ENCODE measurements at regions of chr15 and their contacts with region 1.

Region 1: GRCh38 chr15:41276821-41277220 is 45.8 kb downstream of the CHP1 start:
- DNase-seq: no peak
- H3K4me3 ChIP-seq: no peak overlapping the region
- H3K27ac ChIP-seq: no peak overlapping the region
- H3K4me1 ChIP-seq: no peaks in the 10 kb centered on the region
- H3K27me3 ChIP-seq: no peaks in the 10 kb centered on the region
- CTCF ChIP-seq: no peak
- EP300 ChIP-seq: no peak
- POLR2A ChIP-seq: no peak

Region 2: DNA sequence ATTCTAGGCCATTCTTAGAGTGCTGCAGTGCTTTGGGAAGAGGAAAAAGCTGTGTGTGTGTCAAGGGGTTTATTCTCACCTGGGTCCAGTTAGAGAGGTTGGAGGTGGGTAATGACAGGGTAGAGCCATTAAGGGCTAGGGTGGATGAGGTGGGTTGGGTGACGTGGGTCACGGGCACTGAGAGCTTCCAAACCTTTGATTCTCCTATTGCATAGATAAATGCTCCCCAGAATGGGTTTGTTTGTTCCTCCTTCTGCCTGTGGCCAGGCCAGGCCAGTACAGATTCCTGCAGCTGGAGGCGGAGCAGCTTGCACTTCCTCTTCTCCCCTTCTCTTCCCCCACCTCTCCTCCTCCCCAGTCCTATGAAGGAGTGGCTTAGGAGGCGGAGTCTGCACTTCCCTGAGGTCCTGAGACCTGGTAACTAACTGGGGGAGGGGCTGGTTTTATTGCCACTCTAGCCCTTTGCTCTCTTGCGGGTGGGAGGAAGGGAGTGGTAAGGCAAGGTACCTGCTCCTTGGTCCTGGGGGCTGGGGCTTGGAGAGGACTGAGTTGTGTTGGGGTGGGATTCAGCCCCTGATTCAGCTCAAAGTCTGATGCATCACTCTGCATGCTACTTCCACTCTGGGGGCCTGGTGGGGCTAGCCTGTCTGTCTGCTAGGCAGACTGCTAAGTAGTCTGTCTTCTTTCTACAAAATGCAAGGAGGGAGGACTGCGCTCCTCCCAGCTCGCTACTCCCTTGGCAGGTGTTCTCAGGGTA is 429.4 kb before region 1 on chr15:
- intact Hi-C with region 1: no loop called
- DNase-seq: peak; percentile 84 to 94
- H3K4me3 ChIP-seq: peak overlapping the region in 3 of 4 donors; percentile 62 to 78 (median 67)
- H3K27ac ChIP-seq: peak overlapping the region; percentile 88 to 94 (median 92)
- H3K4me1 ChIP-seq: peaks cover 26 to 57% (median 45%) of the 10 kb centered on the region in 4 donors
- H3K27me3 ChIP-seq: peaks cover 0 to 41% (median 3%) of the 10 kb centered on the region in 3 donors
- CTCF ChIP-seq: peak in 3 of 7 experiments; percentile 17 to 34 (median 31)
- EP300 ChIP-seq: no peak
- POLR2A ChIP-seq: no peak

Region 3: GRCh38 chr15:41230650-41231533 is 45.9 kb before region 1 on chr15 and contains the starts of genes CHP1 and EXD1:
- intact Hi-C with region 1: loop called (anchors 10 kb)
- DNase-seq: peak; percentile 98 to 99
- H3K4me3 ChIP-seq: peak within 1 kb of the TSS; percentile 69 to 85 (median 76)
- H3K27ac ChIP-seq: peak within 1 kb of the TSS; percentile 88 to 97 (median 94)
- H3K4me1 ChIP-seq: peaks cover 16 to 48% (median 33%) of the 10 kb centered on the region in 4 donors
- H3K27me3 ChIP-seq: no peaks in the 10 kb centered on the region
- CTCF ChIP-seq: peak in 5 of 7 experiments; percentile 90 to 97 (median 96)
- EP300 ChIP-seq: peak; percentile 36
- POLR2A ChIP-seq: peak in 1 of 4 donors; percentile 71
- total RNA-seq, gene CHP1: 65.5 to 387 (median 223) TPM
- total RNA-seq, gene EXD1: not detected

Measured in stomach (tissue), 19 donors.